ENCODE measurements at regions of chr1 and their contacts with region 1.

Region 1: DNA sequence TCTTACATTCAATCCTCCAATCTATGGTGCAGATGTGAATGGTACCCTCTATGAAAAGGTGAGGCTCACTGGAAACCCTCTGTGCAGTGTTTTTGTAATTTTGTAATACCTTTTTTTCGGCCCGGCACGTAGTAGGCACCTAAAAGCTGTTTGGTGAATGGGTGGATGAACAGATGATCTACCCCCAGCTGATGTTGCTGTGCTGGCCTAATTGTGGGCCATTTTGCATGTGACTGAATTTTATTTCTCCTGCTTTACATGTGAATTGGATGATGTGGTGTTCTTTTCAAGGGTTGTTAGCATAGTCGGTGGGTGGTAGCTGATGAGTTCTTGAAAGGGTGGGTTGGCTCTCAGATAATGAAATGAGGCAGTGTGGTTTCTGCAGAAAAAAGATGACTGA is 10.4 kb downstream of the KDM4A start:
- DNase-seq: peak in 1 of 2 experiments; percentile 54
- H3K4me3 ChIP-seq: peak overlapping the region in 1 of 4 experiments; percentile 37; a peak in 2 of 8 replicates
- H3K27ac ChIP-seq: peak overlapping the region; percentile 55; the same call in 1 of the 2 replicates
- H3K4me1 ChIP-seq: peaks cover 3 to 14% (median 11%) of the 10 kb centered on the region in 4 experiments; a peak in 6 of 7 replicates
- H3K27me3 ChIP-seq: no peaks in the 10 kb centered on the region
- CTCF ChIP-seq: no peak
- EP300 ChIP-seq: peak in 1 of 2 experiments; percentile 84; a peak in 1 of 3 replicates
- POLR2A ChIP-seq: no peak
- RAD21 ChIP-seq: no peak

Region 2: DNA sequence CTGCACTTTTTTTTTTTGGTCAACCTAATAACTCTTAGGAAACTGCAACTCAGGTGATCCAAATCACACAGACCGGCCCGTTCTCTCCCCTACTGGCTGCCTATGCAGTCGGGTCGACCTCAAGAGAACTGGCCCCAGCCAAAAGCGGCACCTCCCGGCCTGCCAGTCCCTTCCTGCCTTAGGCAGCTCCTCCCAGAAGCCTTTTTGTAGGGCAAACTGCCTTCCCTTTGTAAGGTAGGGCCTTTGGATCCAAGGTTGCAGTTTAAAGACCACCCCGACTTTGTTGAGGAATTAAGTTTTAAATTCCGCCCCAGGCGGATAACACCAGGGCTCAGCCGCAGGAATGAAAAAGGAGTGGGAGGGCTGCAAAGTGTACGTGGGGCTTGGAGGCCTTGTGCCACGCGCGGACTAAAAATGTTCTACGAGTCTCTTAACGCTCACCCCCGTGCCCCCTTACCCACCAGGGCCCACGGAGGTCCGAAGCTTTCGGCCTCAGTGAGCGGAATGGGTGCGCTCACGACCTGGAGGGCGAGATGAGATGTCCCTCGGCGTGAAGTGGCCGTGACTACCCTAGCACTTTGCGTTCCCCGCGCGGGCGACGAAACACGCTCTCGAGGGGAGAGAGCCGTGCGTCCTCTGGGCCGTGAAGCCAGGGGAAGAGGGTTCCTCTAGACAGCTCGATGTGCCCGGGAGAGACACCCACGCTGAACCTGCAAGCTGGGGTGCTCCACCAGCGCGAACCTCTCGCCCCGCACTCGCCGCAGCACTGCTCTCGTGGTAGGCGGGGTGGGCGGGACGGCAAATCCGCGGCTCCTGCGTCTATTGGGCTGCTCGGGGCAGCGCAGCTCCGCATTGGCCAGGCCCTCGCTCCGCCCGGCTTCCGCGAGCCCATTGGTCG is 46.5 kb after region 1 on chr1:
- CTCF ChIA-PET with region 1: interaction called, 6 read pairs
- POLR2A ChIA-PET with region 1: interaction called, 29 read pairs
- DNase-seq: peak; percentile 77 to 90
- H3K4me3 ChIP-seq: peak overlapping the region; percentile 71 to 91 (median 84)
- H3K27ac ChIP-seq: peak overlapping the region; percentile 72
- H3K4me1 ChIP-seq: peaks cover 0 to 6% (median 5%) of the 10 kb centered on the region in 4 experiments; a peak in 6 of 7 replicates
- H3K27me3 ChIP-seq: no peaks in the 10 kb centered on the region
- CTCF ChIP-seq: no peak
- EP300 ChIP-seq: no peak
- POLR2A ChIP-seq: peak; percentile 53 to 91
- RAD21 ChIP-seq: no peak

Measured in H1 (cell line).